PC-3 (cell line): ENCODE measurements at regions of chr12 and their contacts with region 1.

Region 1: DNA sequence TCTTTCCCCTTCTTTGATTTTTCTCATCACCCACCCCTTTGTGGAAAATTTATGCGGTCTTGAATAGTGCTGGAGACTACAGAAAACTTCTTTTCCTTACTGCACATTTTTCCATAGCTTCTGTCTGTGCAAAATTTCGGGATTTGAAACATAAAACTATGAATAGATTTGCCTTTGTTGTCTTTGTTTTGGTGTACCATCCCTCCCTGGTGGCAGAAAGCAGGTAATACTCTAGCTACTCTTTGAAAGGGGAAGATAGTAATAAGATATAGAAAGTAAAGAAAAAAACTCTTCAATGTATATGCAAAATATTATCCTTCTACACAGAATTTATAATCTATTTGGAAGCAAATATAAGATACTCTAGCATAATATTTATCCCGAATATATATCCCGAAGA is 79.1 kb upstream of the LMO3 start:
- DNase-seq: peak; percentile 20
- ATAC-seq: no peak
- H3K4me3 ChIP-seq: no peak overlapping the region
- H3K27ac ChIP-seq: no peak overlapping the region
- H3K4me1 ChIP-seq: no peaks in the 10 kb centered on the region
- H3K27me3 ChIP-seq: no peaks in the 10 kb centered on the region
- CTCF ChIP-seq: peak; percentile 56; the same call in 1 of the 2 replicates

Region 2: DNA sequence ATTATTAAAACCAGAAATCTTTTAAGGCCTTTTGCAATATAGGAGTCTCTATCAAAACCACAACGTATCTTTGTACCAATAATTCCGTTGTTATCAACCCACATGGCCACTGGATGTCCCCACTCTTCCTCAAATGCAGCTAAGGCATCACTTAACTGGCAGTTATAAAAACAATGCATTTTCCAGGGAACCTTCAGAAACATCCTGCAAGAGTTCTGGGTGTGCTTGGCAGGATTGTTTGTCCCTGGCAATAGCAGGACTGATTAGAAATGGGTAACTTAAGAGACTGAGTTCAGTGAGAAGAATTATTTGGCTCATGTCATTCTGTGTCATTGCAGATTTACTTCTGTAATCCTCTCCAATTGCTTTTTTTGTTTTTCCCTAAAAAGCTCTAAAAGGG is 519.6 kb before region 1 on chr12:
- CTCF ChIA-PET with region 1: no interaction called
- POLR2A ChIA-PET with region 1: no interaction called
- intact Hi-C with region 1: loop called (anchors 10 kb)
- DNase-seq: peak; percentile 58
- ATAC-seq: peak; percentile 59
- H3K4me3 ChIP-seq: no peak overlapping the region
- H3K27ac ChIP-seq: no peak overlapping the region
- H3K4me1 ChIP-seq: no peaks in the 10 kb centered on the region; the same call in 1 of the 2 replicates
- H3K27me3 ChIP-seq: peaks cover 13% of the 10 kb centered on the region; the same call in 1 of the 2 replicates
- CTCF ChIP-seq: peak; percentile 69

Region 3: DNA sequence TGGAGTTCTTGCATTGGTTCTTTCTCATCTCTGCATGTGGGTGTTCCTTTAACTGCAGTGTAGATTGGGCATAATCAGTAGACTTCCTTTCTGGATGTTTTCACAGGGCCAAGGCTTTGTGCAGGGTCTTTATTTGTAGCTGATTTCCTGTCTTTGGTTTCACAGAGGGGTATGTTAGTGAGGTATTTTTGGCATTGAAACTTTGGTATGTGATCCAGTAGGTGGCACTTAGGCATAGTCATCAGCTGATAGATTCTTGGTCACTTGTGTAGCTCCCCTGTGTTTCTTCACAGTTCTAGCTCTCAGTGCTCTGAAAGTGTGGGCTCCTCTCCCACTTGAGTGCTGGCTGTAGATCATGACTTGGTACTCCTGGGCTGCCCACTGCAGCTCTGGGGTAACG is 26.4 kb before region 1 on chr12:
- CTCF ChIA-PET with region 1: no interaction called
- POLR2A ChIA-PET with region 1: no interaction called
- intact Hi-C with region 1: no loop called
- DNase-seq: no peak
- ATAC-seq: no peak
- H3K4me3 ChIP-seq: no peak overlapping the region
- H3K27ac ChIP-seq: no peak overlapping the region
- H3K4me1 ChIP-seq: no peaks in the 10 kb centered on the region
- H3K27me3 ChIP-seq: no peaks in the 10 kb centered on the region
- CTCF ChIP-seq: no peak

Region 4: DNA sequence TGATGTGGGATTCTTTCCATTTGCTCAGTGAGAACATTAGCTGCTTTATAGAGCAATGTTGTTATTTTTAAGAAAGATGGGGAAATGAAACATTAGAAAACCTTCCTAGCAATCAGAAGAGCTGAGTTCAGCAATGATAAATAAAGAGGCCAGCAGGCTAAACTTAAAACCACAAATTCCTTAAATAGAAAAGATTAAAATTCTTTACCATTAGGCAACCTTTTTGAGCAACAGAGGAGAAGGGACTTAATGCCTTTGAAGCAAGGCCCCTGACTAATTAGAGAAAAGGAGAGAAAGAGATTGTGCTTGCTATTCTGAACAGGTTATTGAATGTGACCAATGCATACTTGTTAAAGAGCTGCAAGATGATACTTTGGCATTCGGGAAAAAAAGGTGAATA is 81.6 kb after region 1 on chr12:
- CTCF ChIA-PET with region 1: no interaction called
- POLR2A ChIA-PET with region 1: no interaction called
- intact Hi-C with region 1: no loop called
- DNase-seq: no peak
- ATAC-seq: no peak
- H3K4me3 ChIP-seq: no peak overlapping the region
- H3K27ac ChIP-seq: no peak overlapping the region
- H3K4me1 ChIP-seq: no peaks in the 10 kb centered on the region
- H3K27me3 ChIP-seq: peaks cover 6% of the 10 kb centered on the region
- CTCF ChIP-seq: no peak